Activated naive CD4-positive, alpha-beta T cell treated with anti-CD3 and anti-CD28 coated beads for 36 hours (primary cell): ENCODE measurements at regions of chr7 and their contacts with region 1.

Region 1: DNA sequence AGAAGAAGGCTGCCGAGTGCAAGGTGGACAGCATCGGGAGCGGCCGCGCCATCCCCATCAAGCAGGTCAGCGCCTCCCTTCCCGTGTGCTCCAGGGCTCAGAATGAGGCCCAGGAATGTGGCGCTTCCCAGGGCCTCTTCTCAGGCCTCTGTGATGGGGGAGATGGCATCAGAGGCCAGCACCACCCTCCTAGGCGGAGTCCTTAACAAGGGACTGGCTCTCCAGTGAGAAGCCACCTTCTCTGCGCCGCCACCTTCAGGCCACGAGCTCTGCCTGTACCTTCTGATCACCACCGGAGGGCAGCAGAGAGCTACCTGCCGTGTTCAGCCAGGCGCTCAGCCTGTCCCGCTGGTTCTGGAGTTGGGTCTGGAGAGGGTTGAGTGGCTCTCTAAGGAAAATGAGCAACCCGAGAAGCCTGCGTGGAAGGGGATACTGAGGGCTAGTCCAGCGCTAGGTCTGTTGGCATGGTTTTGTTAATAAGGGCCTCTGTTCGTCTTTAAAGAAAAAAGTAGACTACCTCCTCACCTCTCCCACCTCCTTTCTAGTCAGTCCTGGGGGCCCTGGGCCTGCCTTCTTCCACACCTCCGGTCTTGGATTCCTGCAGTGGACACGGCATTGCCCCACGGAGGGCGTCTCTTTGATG is 37.7 kb downstream of the AGAP3 start:
- DNase-seq: peak; percentile 89
- H3K4me3 Mint-ChIP-seq: no peak overlapping the region
- H3K27ac Mint-ChIP-seq: no peak overlapping the region
- H3K4me1 Mint-ChIP-seq: peaks cover 4% of the 10 kb centered on the region
- H3K27me3 Mint-ChIP-seq: no peaks in the 10 kb centered on the region

Region 2: GRCh38 chr7:151047970-151048815 is 75.8 kb before region 1 on chr7 and contains the start of gene ASIC3:
- CTCF ChIA-PET with region 1: no interaction called
- intact Hi-C with region 1: no loop called
- DNase-seq: no peak
- H3K4me3 Mint-ChIP-seq: no peak within 1 kb of the TSS
- H3K27ac Mint-ChIP-seq: no peak within 1 kb of the TSS
- H3K4me1 Mint-ChIP-seq: peaks cover 5% of the 10 kb centered on the region
- H3K27me3 Mint-ChIP-seq: no peaks in the 10 kb centered on the region
- total RNA-seq, gene ASIC3: 6.8 to 7.9 TPM

Region 3: GRCh38 chr7:151172273-151173141 is 48.6 kb after region 1 on chr7:
- CTCF ChIA-PET with region 1: interaction called, 12 read pairs
- intact Hi-C with region 1: loop called (anchors 1 kb)
- DNase-seq: peak; percentile 81
- H3K4me3 Mint-ChIP-seq: no peak overlapping the region
- H3K27ac Mint-ChIP-seq: no peak overlapping the region
- H3K4me1 Mint-ChIP-seq: peaks cover 10% of the 10 kb centered on the region
- H3K27me3 Mint-ChIP-seq: peaks cover 51% of the 10 kb centered on the region